ENCODE measurements at regions of chr6 and their contacts with region 1.

Region 1: GRCh38 chr6:159761873-159762680 is at the start of gene ACAT2:
- H3K4me3 Mint-ChIP-seq: peak within 1 kb of the TSS; percentile 95
- H3K27ac Mint-ChIP-seq: peak within 1 kb of the TSS; percentile 95
- H3K4me1 Mint-ChIP-seq: peaks cover 39% of the 10 kb centered on the region
- H3K27me3 Mint-ChIP-seq: no peaks in the 10 kb centered on the region

Region 2: GRCh38 chr6:159726918-159727716 is 35.0 kb before region 1 on chr6 and contains the start of gene WTAP:
- intact Hi-C with region 1: loop called (anchors 2 kb)
- H3K4me3 Mint-ChIP-seq: peak within 1 kb of the TSS; percentile 90
- H3K27ac Mint-ChIP-seq: peak within 1 kb of the TSS; percentile 97
- H3K4me1 Mint-ChIP-seq: peaks cover 35% of the 10 kb centered on the region
- H3K27me3 Mint-ChIP-seq: no peaks in the 10 kb centered on the region

Measured in dendritic cell treated with granulocyte-macrophage colony-stimulating factor and Interleukin-4, amounts not matched to agents 40 ng/mL and 50 ng/mL, for 4 days (primary cell).